T-cell (primary cell): ENCODE measurements at regions of chr17 and their contacts with region 1.

Region 1: GRCh38 chr17:7306911-7307686 is at the start of gene EIF5A:
- DNase-seq: peak; percentile 99 to 100 (median 100)
- ATAC-seq: peak; percentile 75 to 83 (median 80)
- H3K4me3 ChIP-seq: peak within 1 kb of the TSS; percentile 76 to 99
- H3K4me3 Mint-ChIP-seq: peak within 1 kb of the TSS; percentile 80 to 96 (median 93)
- H3K27ac ChIP-seq: peak within 1 kb of the TSS; percentile 98
- H3K27ac Mint-ChIP-seq: peak within 1 kb of the TSS; percentile 98 to 99
- H3K4me1 ChIP-seq: peaks cover 13 to 48% of the 10 kb centered on the region in 2 experiments
- H3K4me1 Mint-ChIP-seq: peaks cover 33 to 39% (median 37%) of the 10 kb centered on the region in 3 donors
- H3K27me3 ChIP-seq: peaks cover 0 to 2% of the 10 kb centered on the region in 2 experiments
- H3K27me3 Mint-ChIP-seq: no peaks in the 10 kb centered on the region
- total RNA-seq, gene EIF5A: 286 to 481 (median 306) TPM

Region 2: GRCh38 chr17:7014995-7015958 is 291.8 kb before region 1 on chr17:
- CTCF ChIA-PET with region 1: no interaction called
- POLR2A ChIA-PET with region 1: interaction called in 1 of 2 experiments, 10 read pairs
- DNase-seq: peak in 33 of 35 experiments; percentile 39 to 94 (median 83)
- ATAC-seq: peak; percentile 11 to 62 (median 13)
- H3K4me3 ChIP-seq: peak overlapping the region; percentile 89 to 100
- H3K4me3 Mint-ChIP-seq: peak overlapping the region; percentile 87 to 93 (median 91)
- H3K27ac ChIP-seq: peak overlapping the region; percentile 98
- H3K27ac Mint-ChIP-seq: peak overlapping the region; percentile 96 to 97
- H3K4me1 ChIP-seq: peaks cover 27 to 68% of the 10 kb centered on the region in 2 experiments
- H3K4me1 Mint-ChIP-seq: peaks cover 59 to 73% (median 73%) of the 10 kb centered on the region in 3 donors
- H3K27me3 ChIP-seq: no peaks in the 10 kb centered on the region
- H3K27me3 Mint-ChIP-seq: no peaks in the 10 kb centered on the region

Region 3: DNA sequence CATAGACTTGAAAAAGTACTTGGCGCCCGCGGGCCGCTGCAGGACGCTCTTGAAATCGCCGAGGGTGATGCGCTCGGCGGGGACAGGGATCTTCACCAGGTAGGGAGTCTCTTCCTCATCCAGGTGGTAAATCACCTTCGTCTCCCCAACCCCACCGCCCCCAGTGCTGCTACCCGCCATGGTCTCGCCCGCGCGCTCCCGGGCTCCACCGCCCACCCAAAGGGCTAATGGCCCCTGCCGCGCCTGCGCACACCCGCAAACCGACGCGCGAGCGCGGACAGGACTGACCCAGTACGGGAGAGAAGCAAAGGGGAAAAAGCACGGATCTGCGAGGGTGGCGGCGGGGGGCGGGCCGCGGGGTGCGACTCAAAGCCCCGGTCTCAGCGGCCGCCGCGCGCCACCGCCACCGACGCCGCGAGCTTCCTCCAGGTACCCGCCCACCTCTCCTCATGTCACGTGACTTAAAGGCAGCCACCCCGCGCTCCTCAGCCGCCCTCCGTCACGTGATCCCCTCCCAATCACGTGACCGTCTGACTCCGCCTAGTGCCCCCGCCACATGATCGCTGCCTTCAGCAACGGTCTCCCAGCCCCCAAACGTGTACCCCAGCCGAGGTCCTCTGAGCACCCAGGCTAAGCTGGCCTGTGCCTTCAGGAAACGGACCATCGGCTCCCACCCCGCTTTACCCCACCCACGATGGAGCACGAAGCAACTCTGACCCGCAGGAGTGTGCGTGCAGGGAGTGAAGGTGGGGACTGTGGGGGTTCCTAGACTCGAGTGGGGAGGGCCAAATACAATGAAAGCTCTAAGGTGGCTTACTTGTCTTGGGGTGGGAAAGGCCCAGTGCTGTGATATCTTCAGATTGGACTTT is 72.8 kb before region 1 on chr17 and contains the start of gene DVL2:
- CTCF ChIA-PET with region 1: no interaction called
- POLR2A ChIA-PET with region 1: interaction called in 1 of 2 experiments, 10 read pairs
- DNase-seq: peak; percentile 81 to 97 (median 93)
- ATAC-seq: peak; percentile 54 to 68 (median 58)
- H3K4me3 ChIP-seq: peak within 1 kb of the TSS; percentile 55 to 67
- H3K4me3 Mint-ChIP-seq: peak within 1 kb of the TSS; percentile 89 to 99 (median 91)
- H3K27ac ChIP-seq: peak within 1 kb of the TSS; percentile 35
- H3K27ac Mint-ChIP-seq: peak within 1 kb of the TSS; percentile 90 to 92
- H3K4me1 ChIP-seq: peaks cover 11 to 48% of the 10 kb centered on the region in 2 experiments
- H3K4me1 Mint-ChIP-seq: peaks cover 51 to 57% (median 54%) of the 10 kb centered on the region in 3 donors
- H3K27me3 ChIP-seq: no peaks in the 10 kb centered on the region
- H3K27me3 Mint-ChIP-seq: no peaks in the 10 kb centered on the region
- total RNA-seq, gene DVL2: 48.2 to 76.3 (median 70.4) TPM